Natural killer cell (primary cell): ENCODE measurements at regions of chr13 and their contacts with region 1.

Region 1: DNA sequence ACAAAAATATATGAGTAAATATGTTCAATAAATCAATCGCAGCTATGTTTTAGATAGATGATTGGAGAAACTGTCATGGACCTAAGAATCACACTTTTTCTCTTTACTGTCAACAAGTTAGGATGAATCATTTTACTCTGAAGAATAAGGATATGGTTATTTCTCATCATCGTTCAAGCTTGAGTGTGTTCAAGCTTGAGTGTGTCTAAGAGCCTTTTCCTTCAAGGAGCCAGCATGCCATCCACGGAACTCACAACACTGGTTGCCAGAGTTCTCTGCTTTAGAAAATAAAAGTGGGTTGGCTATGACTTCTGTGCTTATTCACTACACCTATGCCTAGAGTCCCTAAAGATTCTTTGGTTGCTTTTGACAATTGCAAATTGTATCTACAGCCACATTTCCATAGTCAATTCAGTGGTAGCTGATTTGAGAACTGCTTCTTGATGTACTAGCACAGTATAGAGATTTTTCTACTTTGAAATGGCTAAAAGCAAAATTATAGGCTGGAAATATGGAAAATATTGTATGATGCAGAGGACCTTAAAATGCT is 58.1 kb upstream of the SCEL start:
- DNase-seq: no peak
- ATAC-seq: no peak
- H3K4me3 ChIP-seq: no peak overlapping the region
- H3K4me3 Mint-ChIP-seq: no peak overlapping the region
- H3K27ac ChIP-seq: no peak overlapping the region
- H3K27ac Mint-ChIP-seq: no peak overlapping the region
- H3K4me1 ChIP-seq: no peaks in the 10 kb centered on the region
- H3K4me1 Mint-ChIP-seq: peaks cover 6 to 8% of the 10 kb centered on the region in 2 donors
- H3K27me3 ChIP-seq: no peaks in the 10 kb centered on the region
- H3K27me3 Mint-ChIP-seq: peaks cover 0 to 11% of the 10 kb centered on the region in 2 donors
- CTCF ChIP-seq: no peak

Region 2: GRCh38 chr13:77184455-77184854 is 292.9 kb before region 1 on chr13:
- intact Hi-C with region 1: loop called (anchors 10 kb)
- DNase-seq: no peak
- ATAC-seq: no peak
- H3K4me3 ChIP-seq: no peak overlapping the region
- H3K4me3 Mint-ChIP-seq: no peak overlapping the region
- H3K27ac ChIP-seq: peak overlapping the region; percentile 33
- H3K27ac Mint-ChIP-seq: peak overlapping the region; percentile 48 to 62
- H3K4me1 ChIP-seq: no peaks in the 10 kb centered on the region
- H3K4me1 Mint-ChIP-seq: peaks cover 5% of the 10 kb centered on the region in 2 donors
- H3K27me3 ChIP-seq: no peaks in the 10 kb centered on the region
- H3K27me3 Mint-ChIP-seq: no peaks in the 10 kb centered on the region
- CTCF ChIP-seq: no peak

Region 3: DNA sequence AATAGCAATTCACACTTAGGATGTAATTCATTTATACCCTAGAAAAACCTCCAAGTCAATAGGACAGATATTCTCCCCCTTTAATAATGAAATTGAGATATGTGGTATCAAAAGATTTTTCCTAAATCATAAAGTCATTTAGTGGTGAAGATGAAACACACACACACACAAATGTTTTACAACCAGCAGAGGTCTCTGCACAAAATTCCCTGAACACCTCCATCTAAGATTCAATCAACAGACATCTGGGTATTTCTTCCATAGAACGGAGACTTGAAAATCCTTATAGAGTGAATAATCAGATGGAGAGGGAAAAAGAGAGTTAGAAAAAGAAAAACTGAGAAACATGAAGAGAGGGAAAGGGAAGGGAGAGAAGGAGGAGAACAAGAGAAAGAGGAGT is 203.2 kb before region 1 on chr13:
- intact Hi-C with region 1: loop called (anchors 10 kb)
- DNase-seq: peak in 1 of 2 donors; percentile 20
- ATAC-seq: no peak
- H3K4me3 ChIP-seq: no peak overlapping the region
- H3K4me3 Mint-ChIP-seq: no peak overlapping the region
- H3K27ac ChIP-seq: no peak overlapping the region
- H3K27ac Mint-ChIP-seq: peak overlapping the region in 1 of 2 donors; percentile 0
- H3K4me1 ChIP-seq: no peaks in the 10 kb centered on the region
- H3K4me1 Mint-ChIP-seq: peaks cover 9 to 10% of the 10 kb centered on the region in 2 donors
- H3K27me3 ChIP-seq: no peaks in the 10 kb centered on the region
- H3K27me3 Mint-ChIP-seq: no peaks in the 10 kb centered on the region
- CTCF ChIP-seq: peak; percentile 19

Region 4: GRCh38 chr13:77415253-77416071 is 61.9 kb before region 1 on chr13:
- intact Hi-C with region 1: no loop called
- DNase-seq: no peak
- ATAC-seq: no peak
- H3K4me3 ChIP-seq: no peak overlapping the region
- H3K4me3 Mint-ChIP-seq: no peak overlapping the region
- H3K27ac ChIP-seq: no peak overlapping the region
- H3K27ac Mint-ChIP-seq: no peak overlapping the region
- H3K4me1 ChIP-seq: no peaks in the 10 kb centered on the region
- H3K4me1 Mint-ChIP-seq: no peaks in the 10 kb centered on the region
- H3K27me3 ChIP-seq: no peaks in the 10 kb centered on the region
- H3K27me3 Mint-ChIP-seq: peaks cover 0 to 2% of the 10 kb centered on the region in 2 donors
- CTCF ChIP-seq: no peak